ENCODE measurements at regions of chr14 and their contacts with region 1.

Region 1: GRCh38 chr14:53306267-53306721 is 153.2 kb upstream of the DDHD1 start:
- DNase-seq: peak; percentile 61
- H3K4me3 ChIP-seq: peak overlapping the region; percentile 37
- H3K27ac ChIP-seq: no peak overlapping the region
- H3K4me1 ChIP-seq: peaks cover 13% of the 10 kb centered on the region
- H3K27me3 ChIP-seq: peaks cover 16% of the 10 kb centered on the region
- CTCF ChIP-seq: peak; percentile 89

Region 2: DNA sequence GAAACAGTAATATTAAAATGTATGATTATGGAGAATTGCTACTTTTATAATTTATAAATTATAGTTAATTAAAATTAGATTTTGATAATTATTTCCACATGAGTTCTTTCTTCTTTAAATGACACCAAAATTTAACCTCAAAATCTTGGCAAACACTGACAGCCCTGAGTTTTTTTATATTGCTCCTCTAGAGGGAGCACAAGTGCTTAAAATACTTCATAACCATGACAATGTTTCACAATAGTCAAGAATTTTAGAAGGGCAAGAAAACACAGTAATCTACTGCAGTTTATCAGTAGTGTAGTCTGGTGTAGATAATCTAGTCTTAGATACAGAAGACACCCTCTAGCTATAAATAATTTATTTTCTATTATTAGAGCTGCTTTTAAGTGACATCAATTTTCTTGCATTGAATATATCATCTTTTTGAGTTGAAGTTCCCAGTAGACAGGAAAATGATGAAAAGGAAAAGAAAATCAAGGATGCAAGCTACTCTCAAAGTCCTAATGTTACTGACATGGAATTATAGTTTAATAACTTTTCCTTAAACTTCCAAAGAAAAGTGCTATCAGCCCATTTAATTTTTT is 1006.5 kb before region 1 on chr14:
- CTCF ChIA-PET with region 1: no interaction called
- POLR2A ChIA-PET with region 1: no interaction called
- intact Hi-C with region 1: loop called (anchors 10 kb)
- DNase-seq: peak; percentile 64
- H3K4me3 ChIP-seq: no peak overlapping the region
- H3K27ac ChIP-seq: no peak overlapping the region
- H3K4me1 ChIP-seq: no peaks in the 10 kb centered on the region
- H3K27me3 ChIP-seq: peaks cover 7% of the 10 kb centered on the region
- CTCF ChIP-seq: peak; percentile 76

Region 3: DNA sequence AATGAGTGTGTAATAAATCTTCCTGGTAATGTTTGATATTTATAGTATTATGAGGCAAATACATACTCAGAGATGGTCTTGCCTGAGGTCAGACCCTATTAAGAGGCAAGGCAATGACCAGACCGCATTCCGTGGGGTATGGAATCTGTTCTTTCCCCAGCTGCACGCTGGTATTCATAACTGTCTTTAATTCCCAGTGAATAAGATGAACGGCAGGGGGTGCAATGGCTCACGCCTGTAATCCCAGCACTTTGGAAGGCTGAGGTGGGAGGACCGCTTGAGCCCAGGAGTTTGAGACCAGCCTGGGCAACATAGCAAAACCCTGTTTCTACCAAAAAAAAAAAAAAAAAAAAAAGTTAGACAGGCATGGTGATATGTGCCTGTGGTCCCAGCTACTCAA is 655.5 kb before region 1 on chr14:
- CTCF ChIA-PET with region 1: no interaction called
- POLR2A ChIA-PET with region 1: no interaction called
- intact Hi-C with region 1: loop called (anchors 10 kb)
- DNase-seq: peak; percentile 28
- H3K4me3 ChIP-seq: no peak overlapping the region
- H3K27ac ChIP-seq: no peak overlapping the region
- H3K4me1 ChIP-seq: no peaks in the 10 kb centered on the region
- H3K27me3 ChIP-seq: no peaks in the 10 kb centered on the region
- CTCF ChIP-seq: peak; percentile 47

Region 4: DNA sequence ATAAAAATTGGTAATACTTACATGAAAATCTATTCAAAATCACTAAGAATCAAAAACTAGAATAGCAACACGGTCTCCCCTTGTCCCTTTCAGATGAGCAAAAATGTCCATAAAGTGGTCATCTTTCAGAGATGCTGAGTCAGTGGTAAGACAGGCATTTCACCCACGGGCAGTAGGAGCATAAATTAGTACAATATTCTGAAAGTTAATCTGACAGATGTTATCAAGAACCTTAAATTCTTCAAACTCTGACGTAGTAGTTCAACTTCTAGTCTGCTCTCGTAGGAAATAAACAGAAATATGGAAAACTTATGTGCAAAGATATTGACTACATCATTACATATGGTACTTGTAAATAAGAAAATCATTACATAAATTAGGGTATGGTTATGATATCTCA is 481.8 kb before region 1 on chr14:
- CTCF ChIA-PET with region 1: no interaction called
- POLR2A ChIA-PET with region 1: no interaction called
- intact Hi-C with region 1: loop called (anchors 5 kb)
- DNase-seq: no peak
- H3K4me3 ChIP-seq: no peak overlapping the region
- H3K27ac ChIP-seq: no peak overlapping the region
- H3K4me1 ChIP-seq: peaks cover 13% of the 10 kb centered on the region
- H3K27me3 ChIP-seq: no peaks in the 10 kb centered on the region
- CTCF ChIP-seq: no peak

Region 5: DNA sequence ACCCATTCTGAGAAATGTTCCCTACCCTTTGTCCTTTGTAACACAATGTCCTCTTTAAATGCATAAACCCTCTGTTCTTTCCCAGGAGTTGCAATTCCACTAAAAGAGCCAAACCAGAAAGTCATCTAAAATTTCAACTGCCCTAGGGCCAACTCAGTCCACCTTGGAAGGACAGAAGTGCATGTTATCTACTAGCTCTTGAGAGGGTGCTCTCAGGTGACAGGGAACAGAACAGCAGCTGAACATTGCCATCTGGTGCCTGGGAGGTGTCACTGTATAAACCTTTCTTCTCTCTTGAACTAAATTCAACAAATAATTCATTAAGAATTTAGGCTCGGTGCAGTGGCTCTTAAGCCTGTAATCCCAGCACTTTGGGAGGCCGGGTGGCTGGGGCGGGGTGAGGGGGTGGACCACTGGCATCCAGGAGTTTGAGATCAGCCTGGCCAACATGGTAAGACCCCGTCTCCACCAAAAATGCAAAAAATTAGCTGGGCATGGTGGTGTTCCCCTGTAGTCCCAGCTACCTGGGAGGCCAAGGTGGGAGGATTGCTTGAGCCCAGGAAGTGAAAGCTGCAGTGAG is 345.1 kb before region 1 on chr14:
- CTCF ChIA-PET with region 1: no interaction called
- POLR2A ChIA-PET with region 1: no interaction called
- intact Hi-C with region 1: loop called (anchors 10 kb)
- DNase-seq: peak; percentile 79
- H3K4me3 ChIP-seq: no peak overlapping the region
- H3K27ac ChIP-seq: no peak overlapping the region
- H3K4me1 ChIP-seq: no peaks in the 10 kb centered on the region
- H3K27me3 ChIP-seq: no peaks in the 10 kb centered on the region
- CTCF ChIP-seq: peak; percentile 79

Region 6: DNA sequence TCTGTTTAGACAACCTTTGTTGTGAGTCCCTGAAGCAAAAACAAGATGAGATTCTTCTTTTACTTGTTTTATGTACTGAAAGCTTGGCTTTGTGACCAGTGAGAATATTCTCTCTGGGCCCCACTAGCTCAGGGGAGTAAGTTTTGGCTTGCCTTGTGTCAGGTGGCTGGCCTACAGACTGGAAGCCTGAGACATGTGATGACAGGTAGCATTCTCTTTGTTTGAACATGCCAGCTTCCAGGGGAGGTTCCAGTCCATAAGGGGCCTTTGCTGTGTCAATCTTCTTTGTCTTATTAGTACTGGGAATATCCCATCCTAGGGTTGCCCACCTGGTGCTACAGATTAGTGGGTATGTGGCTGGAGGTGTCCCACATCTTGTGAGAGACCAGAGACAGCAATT is 289.4 kb before region 1 on chr14:
- CTCF ChIA-PET with region 1: interaction called, 14 read pairs
- POLR2A ChIA-PET with region 1: no interaction called
- intact Hi-C with region 1: no loop called
- DNase-seq: no peak
- H3K4me3 ChIP-seq: no peak overlapping the region
- H3K27ac ChIP-seq: no peak overlapping the region
- H3K4me1 ChIP-seq: no peaks in the 10 kb centered on the region
- H3K27me3 ChIP-seq: no peaks in the 10 kb centered on the region
- CTCF ChIP-seq: no peak

Region 7: GRCh38 chr14:53055003-53055402 is 251.3 kb before region 1 on chr14:
- CTCF ChIA-PET with region 1: no interaction called
- POLR2A ChIA-PET with region 1: no interaction called
- intact Hi-C with region 1: loop called (anchors 5 kb)
- DNase-seq: peak; percentile 63
- H3K4me3 ChIP-seq: no peak overlapping the region
- H3K27ac ChIP-seq: no peak overlapping the region
- H3K4me1 ChIP-seq: no peaks in the 10 kb centered on the region
- H3K27me3 ChIP-seq: no peaks in the 10 kb centered on the region
- CTCF ChIP-seq: peak; percentile 83